Common myeloid progenitor, CD34-positive (primary cell): ENCODE measurements at regions of chr1 and their contacts with region 1.

Region 1: DNA sequence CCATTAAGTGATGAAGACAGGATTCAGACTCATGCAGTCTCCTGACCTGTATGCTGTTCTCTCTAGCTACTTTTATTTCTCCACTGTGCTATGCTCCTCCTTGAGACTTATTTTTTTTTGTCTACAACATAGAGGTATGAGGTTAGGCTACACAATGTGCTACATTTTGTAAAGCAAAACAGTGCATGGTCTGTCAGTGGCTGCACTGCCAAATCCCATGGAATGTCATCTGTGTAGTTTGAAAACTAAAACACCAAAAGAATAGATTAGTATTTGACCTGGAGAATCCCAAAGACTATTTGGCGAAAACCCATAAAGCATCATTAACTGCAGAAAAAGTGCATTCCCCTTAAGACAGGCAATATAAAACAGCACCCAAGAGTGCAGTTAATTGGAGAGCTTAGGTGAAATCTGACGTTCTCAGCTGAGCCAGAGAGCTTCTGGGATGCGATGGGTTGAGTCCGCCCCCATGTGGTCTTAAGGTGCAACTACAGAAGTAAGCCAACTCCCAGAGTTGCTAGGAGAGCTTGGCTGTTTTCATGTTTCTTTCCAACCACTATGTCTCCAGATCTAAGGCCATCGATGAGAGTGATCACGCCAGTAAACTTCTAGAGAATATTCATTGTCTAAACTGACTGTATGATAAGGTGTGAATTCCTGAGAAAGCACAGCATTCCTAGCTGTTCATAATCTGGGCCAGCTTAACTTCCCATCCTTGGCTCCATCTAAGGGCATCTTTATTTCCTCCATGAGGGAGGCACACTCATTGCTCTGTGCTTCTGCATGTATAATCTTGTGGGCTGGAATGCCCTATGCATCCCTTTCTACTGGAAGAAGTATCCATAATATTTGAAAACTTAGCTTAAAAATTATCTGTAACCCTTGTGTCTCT is 20.7 kb upstream of the CYP2J2 start:
- DNase-seq: peak; percentile 50 to 78 (median 74)
- H3K4me3 ChIP-seq: no peak overlapping the region
- H3K27ac ChIP-seq: no peak overlapping the region
- H3K4me1 ChIP-seq: no peaks in the 10 kb centered on the region
- H3K27me3 ChIP-seq: no peaks in the 10 kb centered on the region

Region 2: GRCh38 chr1:59879574-59879973 is 67.7 kb before region 1 on chr1:
- CTCF ChIA-PET with region 1: interaction called, 16 read pairs
- POLR2A ChIA-PET with region 1: no interaction called
- DNase-seq: peak; percentile 70 to 79 (median 77)
- H3K4me3 ChIP-seq: no peak overlapping the region
- H3K27ac ChIP-seq: no peak overlapping the region
- H3K4me1 ChIP-seq: peaks cover 0 to 6% (median 5%) of the 10 kb centered on the region in 4 experiments
- H3K27me3 ChIP-seq: no peaks in the 10 kb centered on the region

Region 3: GRCh38 chr1:59903141-59903754 is 44.0 kb before region 1 on chr1:
- CTCF ChIA-PET with region 1: interaction called, 20 read pairs
- POLR2A ChIA-PET with region 1: no interaction called
- DNase-seq: peak; percentile 37 to 57 (median 53)
- H3K4me3 ChIP-seq: no peak overlapping the region
- H3K27ac ChIP-seq: no peak overlapping the region
- H3K4me1 ChIP-seq: no peaks in the 10 kb centered on the region
- H3K27me3 ChIP-seq: no peaks in the 10 kb centered on the region

Region 4: DNA sequence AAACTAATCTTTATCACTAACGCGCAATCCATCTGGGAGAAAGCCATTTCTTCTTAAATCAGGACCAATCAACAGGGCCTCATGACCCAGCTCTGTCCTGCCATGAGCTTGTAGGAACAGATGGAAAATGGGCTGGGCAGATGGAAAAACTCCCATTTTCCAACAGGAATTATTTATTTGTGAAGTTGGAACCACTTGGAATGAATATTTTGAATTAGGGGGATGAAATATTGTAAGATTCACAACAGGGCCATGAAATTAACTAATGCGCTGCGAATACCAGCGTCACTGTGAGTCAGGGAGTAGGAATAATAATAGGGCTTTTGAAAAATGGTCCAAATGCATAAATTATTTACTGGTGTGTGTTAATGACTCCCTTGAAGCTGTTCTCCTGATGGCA is 32.4 kb after region 1 on chr1:
- CTCF ChIA-PET with region 1: no interaction called
- POLR2A ChIA-PET with region 1: no interaction called
- DNase-seq: no peak
- H3K4me3 ChIP-seq: no peak overlapping the region
- H3K27ac ChIP-seq: no peak overlapping the region
- H3K4me1 ChIP-seq: peaks cover 0 to 3% (median 0%) of the 10 kb centered on the region in 4 experiments
- H3K27me3 ChIP-seq: peaks cover 0 to 4% (median 0%) of the 10 kb centered on the region in 5 experiments